ENCODE measurements at regions of chr1 and their contacts with region 1.

Region 1: DNA sequence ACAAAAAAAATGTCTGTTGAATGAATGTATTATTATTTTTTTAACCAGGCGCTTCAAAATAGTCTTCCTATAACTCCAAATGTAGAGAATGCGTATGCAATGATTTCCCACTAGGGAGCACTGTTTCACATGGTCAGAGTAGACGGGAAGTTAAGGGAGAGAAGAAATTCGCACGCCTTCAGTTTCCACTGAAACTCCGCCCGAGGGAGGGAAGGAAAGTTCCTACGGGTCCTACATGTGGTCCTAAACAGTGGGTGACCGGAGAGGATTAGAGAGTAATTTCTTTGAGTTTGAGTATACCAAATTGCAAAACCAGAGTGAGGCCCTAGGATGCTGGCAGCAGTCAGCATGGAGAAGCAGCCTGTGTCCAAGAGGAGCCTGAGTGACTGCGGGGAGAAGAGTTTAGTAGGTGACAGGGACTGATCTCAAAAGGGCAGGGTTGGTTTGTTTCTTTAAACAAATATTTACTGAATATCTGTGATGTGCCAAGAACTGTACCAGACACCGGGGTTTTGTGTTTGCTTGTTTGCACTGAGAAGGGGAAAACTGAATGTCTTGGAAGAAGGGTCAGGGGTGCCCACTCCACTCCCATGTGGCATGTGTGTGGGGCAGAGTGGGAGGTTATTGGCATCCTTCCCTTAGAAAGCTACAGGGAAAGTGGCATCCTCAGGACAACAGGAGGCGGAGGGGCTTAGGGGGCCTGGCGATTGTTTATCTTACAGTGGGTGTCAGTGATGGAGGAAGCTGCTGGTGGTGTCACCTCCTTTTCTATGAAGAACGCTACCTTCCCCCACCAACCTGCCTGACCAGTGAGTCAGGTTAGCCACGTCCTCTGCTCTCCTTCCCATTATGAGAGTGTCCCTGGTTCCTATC is 22.8 kb downstream of the RNU5D-1 start:
- DNase-seq: no peak
- H3K4me3 ChIP-seq: no peak overlapping the region
- H3K27ac ChIP-seq: no peak overlapping the region
- H3K4me1 ChIP-seq: peaks cover 0 to 5% (median 1%) of the 10 kb centered on the region in 4 experiments; a peak in 3 of 7 replicates
- H3K27me3 ChIP-seq: peaks cover 0 to 4% (median 0%) of the 10 kb centered on the region in 4 experiments; a peak in 1 of 7 replicates
- CTCF ChIP-seq: peak in 2 of 3 experiments; percentile 47 to 58; a peak in 2 of 4 replicates
- EP300 ChIP-seq: no peak
- POLR2A ChIP-seq: no peak
- RAD21 ChIP-seq: peak; percentile 48 to 53; a peak in 3 of 4 replicates

Region 2: GRCh38 chr1:44696789-44697345 is 11.3 kb before region 1 on chr1:
- CTCF ChIA-PET with region 1: interaction called, 25 read pairs
- POLR2A ChIA-PET with region 1: interaction called, 4 read pairs
- DNase-seq: no peak
- H3K4me3 ChIP-seq: no peak overlapping the region
- H3K27ac ChIP-seq: no peak overlapping the region
- H3K4me1 ChIP-seq: no peaks in the 10 kb centered on the region
- H3K27me3 ChIP-seq: no peaks in the 10 kb centered on the region
- CTCF ChIP-seq: no peak
- EP300 ChIP-seq: no peak
- POLR2A ChIP-seq: no peak
- RAD21 ChIP-seq: no peak

Measured in H1 (cell line).